PC-9 (cell line): ENCODE measurements at regions of chr2 and their contacts with region 1.

Region 1: GRCh38 chr2:39436592-39437510 is at the start of gene MAP4K3:
- DNase-seq: peak; percentile 87 to 93
- H3K4me3 ChIP-seq: peak within 1 kb of the TSS; percentile 86
- H3K27ac ChIP-seq: peak within 1 kb of the TSS; percentile 69
- H3K4me1 ChIP-seq: peaks cover 53% of the 10 kb centered on the region
- H3K27me3 ChIP-seq: no peaks in the 10 kb centered on the region
- CTCF ChIP-seq: no peak
- total RNA-seq, gene MAP4K3: 38.4 and 46.7 TPM in 2 replicates

Region 2: DNA sequence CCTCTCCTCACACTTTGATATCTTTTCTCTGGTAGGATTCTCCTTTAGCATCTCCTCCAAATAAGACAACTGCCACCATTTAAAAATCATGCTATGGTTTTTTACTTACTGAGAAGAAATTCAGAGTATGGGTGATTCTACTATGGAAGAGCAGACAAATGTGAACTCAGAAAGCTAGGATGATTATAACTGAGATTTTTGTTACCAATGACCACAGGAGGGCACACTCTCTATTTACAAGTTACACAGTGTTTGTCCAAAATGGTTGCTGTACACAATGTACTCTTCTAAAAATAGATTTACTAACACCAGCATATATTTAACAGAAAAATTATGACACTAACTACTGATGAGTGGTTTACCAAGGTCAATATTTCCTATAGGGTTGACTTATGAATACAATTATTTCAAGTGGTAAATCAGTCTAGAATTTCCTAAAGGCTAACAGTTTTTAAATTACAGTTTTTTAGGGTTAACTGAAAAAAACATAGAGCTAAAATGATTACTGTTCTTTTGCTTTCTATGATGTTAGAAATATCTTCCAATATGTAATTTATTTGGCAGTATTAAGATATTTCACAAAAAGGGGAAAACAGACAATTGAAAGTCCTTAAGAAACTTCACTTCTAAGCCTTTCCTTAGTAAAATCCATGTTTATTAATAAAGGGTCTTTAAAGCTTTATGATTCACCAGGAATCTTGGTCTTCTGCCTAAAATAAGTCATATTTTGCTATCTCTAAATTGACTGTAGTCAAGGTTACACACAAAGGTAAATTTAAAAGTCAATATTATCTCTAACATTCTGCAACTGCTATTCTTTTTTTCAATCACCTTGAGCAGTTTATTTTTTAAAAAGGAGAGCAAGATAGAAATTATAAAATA is 57.0 kb before region 1 on chr2:
- CTCF ChIA-PET with region 1: interaction called, 5 read pairs
- POLR2A ChIA-PET with region 1: interaction called, 24 read pairs
- intact Hi-C with region 1: loop called (anchors 2 kb)
- DNase-seq: peak in 1 of 2 experiments; percentile 50
- H3K4me3 ChIP-seq: no peak overlapping the region
- H3K27ac ChIP-seq: no peak overlapping the region; the same call in 1 of the 2 replicates
- H3K4me1 ChIP-seq: no peaks in the 10 kb centered on the region
- H3K27me3 ChIP-seq: no peaks in the 10 kb centered on the region
- CTCF ChIP-seq: peak; percentile 84

Region 3: DNA sequence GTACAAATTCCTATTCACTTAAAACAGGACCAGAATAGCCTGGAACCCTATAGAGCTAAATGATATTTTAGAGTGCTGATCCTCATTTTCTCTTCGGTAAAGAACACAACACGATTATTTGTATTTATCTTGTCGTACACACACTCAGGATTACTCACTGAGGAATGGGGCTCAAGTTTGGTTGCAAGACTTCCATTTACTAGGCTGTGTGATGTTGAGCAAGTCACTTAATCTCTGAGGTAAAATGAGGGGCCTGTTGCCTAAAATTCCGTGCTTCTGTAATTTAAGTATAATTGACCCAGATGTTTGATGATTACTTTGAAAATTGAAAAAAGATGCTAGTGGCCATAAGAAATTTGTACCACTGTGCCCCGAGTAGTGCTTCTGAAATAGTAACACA is 42.8 kb after region 1 on chr2:
- CTCF ChIA-PET with region 1: no interaction called
- POLR2A ChIA-PET with region 1: interaction called, 28 read pairs
- intact Hi-C with region 1: no loop called
- DNase-seq: no peak
- H3K4me3 ChIP-seq: no peak overlapping the region
- H3K27ac ChIP-seq: no peak overlapping the region
- H3K4me1 ChIP-seq: peaks cover 29% of the 10 kb centered on the region
- H3K27me3 ChIP-seq: no peaks in the 10 kb centered on the region
- CTCF ChIP-seq: no peak

Region 4: DNA sequence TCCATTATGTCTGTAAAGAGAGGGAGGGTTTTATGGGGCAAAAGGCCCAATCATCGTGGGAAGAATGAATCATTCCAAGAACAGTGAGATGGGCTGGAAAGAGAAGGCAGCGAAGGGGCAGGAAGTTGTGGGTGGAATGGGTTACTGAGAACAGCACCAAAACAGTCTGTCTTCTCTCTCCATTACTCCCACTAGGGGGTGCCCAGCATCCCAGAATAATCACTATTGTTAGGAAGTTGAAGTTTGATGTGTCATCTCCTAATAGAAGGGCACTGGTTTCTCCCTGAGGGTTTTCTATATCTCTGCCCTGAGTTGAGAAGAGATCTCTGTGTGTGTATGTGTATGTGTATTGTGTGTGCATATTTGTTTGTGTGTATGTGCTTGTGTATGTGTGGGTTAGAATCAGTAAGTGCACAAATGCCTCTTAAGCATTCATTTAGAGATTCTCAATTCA is 76.8 kb after region 1 on chr2:
- CTCF ChIA-PET with region 1: interaction called, 4 read pairs
- POLR2A ChIA-PET with region 1: interaction called, 5 read pairs
- intact Hi-C with region 1: loop called (anchors 2 kb)
- DNase-seq: peak; percentile 40 to 65
- H3K4me3 ChIP-seq: no peak overlapping the region
- H3K27ac ChIP-seq: no peak overlapping the region
- H3K4me1 ChIP-seq: peaks cover 14% of the 10 kb centered on the region; the same call in 1 of the 2 replicates
- H3K27me3 ChIP-seq: no peaks in the 10 kb centered on the region
- CTCF ChIP-seq: peak; percentile 81

Region 5: GRCh38 chr2:39728941-39729351 is 292.1 kb after region 1 on chr2:
- CTCF ChIA-PET with region 1: no interaction called
- POLR2A ChIA-PET with region 1: no interaction called
- intact Hi-C with region 1: loop called (anchors 5 kb)
- DNase-seq: peak; percentile 31 to 49
- H3K4me3 ChIP-seq: no peak overlapping the region
- H3K27ac ChIP-seq: no peak overlapping the region
- H3K4me1 ChIP-seq: no peaks in the 10 kb centered on the region
- H3K27me3 ChIP-seq: no peaks in the 10 kb centered on the region
- CTCF ChIP-seq: peak; percentile 94